PC-3 (cell line): ENCODE measurements at regions of chr7 and their contacts with region 1.

Region 1: DNA sequence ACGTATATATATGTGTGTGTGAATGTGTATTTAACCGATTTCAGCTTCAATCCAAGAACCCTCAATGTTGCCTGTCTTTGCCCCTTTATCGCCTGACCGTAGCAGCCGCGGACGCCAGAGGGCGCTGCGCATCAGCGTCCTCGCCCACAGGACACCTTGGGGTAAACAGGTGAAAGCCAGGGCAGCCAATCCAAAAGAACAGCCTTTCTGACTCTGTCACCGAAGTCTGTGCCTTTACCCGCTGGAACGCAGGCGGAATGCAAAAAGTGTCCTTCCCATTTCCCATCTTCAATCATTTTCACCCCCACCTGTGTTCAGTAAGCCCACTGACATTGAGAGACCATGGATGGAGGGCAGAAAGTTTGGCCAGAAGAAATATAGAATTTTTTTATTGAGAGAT is 3.6 kb downstream of the NXPH1 start:
- DNase-seq: peak; percentile 69
- ATAC-seq: peak; percentile 89
- H3K4me3 ChIP-seq: no peak overlapping the region
- H3K27ac ChIP-seq: no peak overlapping the region
- H3K4me1 ChIP-seq: no peaks in the 10 kb centered on the region
- H3K27me3 ChIP-seq: peaks cover 9% of the 10 kb centered on the region; the same call in 1 of the 2 replicates
- CTCF ChIP-seq: peak; percentile 91

Region 2: DNA sequence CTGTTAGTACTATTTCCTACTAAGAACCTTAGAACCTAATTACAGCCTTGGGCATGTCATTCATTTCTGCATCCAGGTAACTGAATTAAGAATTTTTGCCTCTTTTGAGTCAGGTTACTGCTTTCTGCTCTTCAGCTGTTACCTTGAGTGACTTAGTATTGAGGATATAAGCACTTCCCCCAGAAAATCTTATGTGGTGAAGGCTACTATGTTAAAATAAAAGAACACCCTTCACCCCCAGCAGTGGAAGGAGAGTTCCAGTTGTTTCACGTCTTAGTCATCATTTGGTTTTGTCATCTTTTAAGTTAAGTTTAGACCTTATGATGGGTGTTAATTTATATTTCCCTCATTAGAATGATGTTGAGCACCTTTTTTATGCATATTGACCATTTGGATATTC is 385.6 kb before region 1 on chr7:
- CTCF ChIA-PET with region 1: no interaction called
- POLR2A ChIA-PET with region 1: no interaction called
- intact Hi-C with region 1: no loop called
- DNase-seq: no peak
- ATAC-seq: no peak
- H3K4me3 ChIP-seq: no peak overlapping the region
- H3K27ac ChIP-seq: no peak overlapping the region
- H3K4me1 ChIP-seq: no peaks in the 10 kb centered on the region
- H3K27me3 ChIP-seq: no peaks in the 10 kb centered on the region
- CTCF ChIP-seq: no peak

Region 3: GRCh38 chr7:8724080-8724718 is 287.2 kb after region 1 on chr7:
- CTCF ChIA-PET with region 1: no interaction called
- POLR2A ChIA-PET with region 1: no interaction called
- intact Hi-C with region 1: loop called (anchors 1 kb)
- DNase-seq: peak; percentile 47
- ATAC-seq: peak; percentile 67
- H3K4me3 ChIP-seq: no peak overlapping the region
- H3K27ac ChIP-seq: no peak overlapping the region
- H3K4me1 ChIP-seq: no peaks in the 10 kb centered on the region
- H3K27me3 ChIP-seq: no peaks in the 10 kb centered on the region
- CTCF ChIP-seq: peak; percentile 73

Region 4: GRCh38 chr7:9091282-9091681 is 654.3 kb after region 1 on chr7:
- CTCF ChIA-PET with region 1: no interaction called
- POLR2A ChIA-PET with region 1: no interaction called
- intact Hi-C with region 1: loop called (anchors 1 kb)
- DNase-seq: peak; percentile 40
- ATAC-seq: peak; percentile 80
- H3K4me3 ChIP-seq: no peak overlapping the region
- H3K27ac ChIP-seq: no peak overlapping the region
- H3K4me1 ChIP-seq: no peaks in the 10 kb centered on the region
- H3K27me3 ChIP-seq: no peaks in the 10 kb centered on the region
- CTCF ChIP-seq: peak; percentile 54